ENCODE measurements at regions of chr2 and their contacts with region 1.

Region 1: DNA sequence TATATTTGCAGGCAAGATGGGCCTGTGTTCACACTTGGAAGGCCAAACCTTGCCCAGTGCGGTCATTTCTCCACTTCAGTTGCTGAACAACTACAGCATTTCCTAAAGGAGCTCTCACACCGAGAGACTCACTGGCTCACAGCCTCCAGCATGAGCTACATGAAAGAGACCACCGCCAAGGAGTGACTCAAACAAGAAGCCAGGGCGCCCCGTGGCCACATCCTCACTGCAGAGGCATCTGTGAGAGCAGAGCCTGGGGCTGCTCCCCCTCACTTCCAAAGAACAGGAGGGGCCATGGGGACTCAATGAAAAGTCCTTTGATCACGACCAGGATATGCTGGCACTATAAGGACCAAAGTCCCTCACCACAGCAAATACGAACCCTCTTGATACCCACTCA is 50.0 kb downstream of the TMEM163 start:
- DNase-seq: peak; percentile 83 to 92
- ATAC-seq: peak; percentile 65 to 81 (median 79)
- H3K4me3 ChIP-seq: no peak overlapping the region
- H3K4me3 Mint-ChIP-seq: peak overlapping the region; percentile 78
- H3K27ac ChIP-seq: no peak overlapping the region
- H3K27ac Mint-ChIP-seq: peak overlapping the region; percentile 93 to 98
- H3K4me1 ChIP-seq: peaks cover 89% of the 10 kb centered on the region
- H3K4me1 Mint-ChIP-seq: peaks cover 96 to 100% of the 10 kb centered on the region in 2 donors
- H3K27me3 ChIP-seq: no peaks in the 10 kb centered on the region
- H3K27me3 Mint-ChIP-seq: no peaks in the 10 kb centered on the region
- CTCF ChIP-seq: no peak

Region 2: GRCh38 chr2:134581877-134582546 is 86.8 kb before region 1 on chr2:
- intact Hi-C with region 1: loop called (anchors 2 kb)
- DNase-seq: no peak
- ATAC-seq: no peak
- H3K4me3 ChIP-seq: no peak overlapping the region
- H3K4me3 Mint-ChIP-seq: peak overlapping the region; percentile 5
- H3K27ac ChIP-seq: no peak overlapping the region
- H3K27ac Mint-ChIP-seq: peak overlapping the region; percentile 77 to 79
- H3K4me1 ChIP-seq: peaks cover 46% of the 10 kb centered on the region
- H3K4me1 Mint-ChIP-seq: peaks cover 39 to 58% of the 10 kb centered on the region in 2 donors
- H3K27me3 ChIP-seq: no peaks in the 10 kb centered on the region
- H3K27me3 Mint-ChIP-seq: no peaks in the 10 kb centered on the region
- CTCF ChIP-seq: no peak

Region 3: DNA sequence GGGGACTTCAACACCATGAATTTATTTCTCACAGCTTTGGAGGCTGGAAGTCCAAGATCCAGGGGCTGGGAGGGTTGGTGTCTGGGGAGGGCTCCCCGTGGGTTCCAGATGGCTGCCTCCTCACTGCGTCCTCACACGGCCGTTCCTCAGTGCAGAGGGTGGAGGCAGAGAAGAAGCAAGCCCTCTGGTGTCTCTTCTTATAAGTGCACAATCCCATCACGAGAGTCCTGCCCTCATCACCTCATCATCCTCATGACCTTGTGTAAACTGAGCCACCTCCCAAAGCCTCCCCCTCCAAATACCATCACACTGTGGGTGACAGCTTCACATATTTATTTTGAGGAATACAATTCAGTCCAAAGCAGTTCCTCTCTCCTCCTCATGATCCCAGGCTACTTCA is 23.7 kb after region 1 on chr2:
- intact Hi-C with region 1: loop called (anchors 1 kb)
- DNase-seq: peak in 1 of 2 donors; percentile 70
- ATAC-seq: peak; percentile 56 to 86 (median 85)
- H3K4me3 ChIP-seq: no peak overlapping the region
- H3K4me3 Mint-ChIP-seq: no peak overlapping the region
- H3K27ac ChIP-seq: no peak overlapping the region
- H3K27ac Mint-ChIP-seq: no peak overlapping the region
- H3K4me1 ChIP-seq: peaks cover 3% of the 10 kb centered on the region
- H3K4me1 Mint-ChIP-seq: peaks cover 4% of the 10 kb centered on the region in 2 donors
- H3K27me3 ChIP-seq: no peaks in the 10 kb centered on the region
- H3K27me3 Mint-ChIP-seq: no peaks in the 10 kb centered on the region
- CTCF ChIP-seq: peak; percentile 16

Region 4: DNA sequence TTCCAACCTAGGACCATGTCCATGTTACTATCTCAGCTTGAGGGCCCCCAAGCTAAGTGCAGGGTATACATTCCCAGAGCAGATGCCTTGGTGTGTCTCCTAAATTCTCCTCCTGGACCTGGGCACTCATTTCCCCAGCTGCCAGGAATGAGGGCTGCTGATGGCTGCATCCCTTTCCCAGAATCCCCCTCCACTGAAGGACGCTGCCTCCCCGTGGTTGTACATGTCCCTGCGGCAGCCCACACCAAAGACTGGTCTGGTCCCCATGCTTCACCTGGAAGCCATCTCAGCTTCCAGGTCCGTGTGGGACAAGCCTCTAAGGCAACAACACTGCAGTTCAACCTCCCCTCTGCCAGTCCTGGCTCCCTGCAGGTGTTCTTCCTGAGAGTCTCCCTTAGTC is 35.4 kb after region 1 on chr2:
- intact Hi-C with region 1: no loop called
- DNase-seq: no peak
- ATAC-seq: no peak
- H3K4me3 ChIP-seq: no peak overlapping the region
- H3K4me3 Mint-ChIP-seq: no peak overlapping the region
- H3K27ac ChIP-seq: no peak overlapping the region
- H3K27ac Mint-ChIP-seq: peak overlapping the region in 1 of 2 donors; percentile 33
- H3K4me1 ChIP-seq: peaks cover 23% of the 10 kb centered on the region
- H3K4me1 Mint-ChIP-seq: peaks cover 24 to 31% of the 10 kb centered on the region in 2 donors
- H3K27me3 ChIP-seq: no peaks in the 10 kb centered on the region
- H3K27me3 Mint-ChIP-seq: peaks cover 4 to 8% of the 10 kb centered on the region in 2 donors
- CTCF ChIP-seq: no peak

Region 5: GRCh38 chr2:134918526-134919340 is 249.9 kb after region 1 on chr2 and contains the start of gene CCNT2:
- intact Hi-C with region 1: loop called (anchors 2 kb)
- DNase-seq: peak; percentile 99 to 100
- ATAC-seq: peak; percentile 81 to 93 (median 82)
- H3K4me3 ChIP-seq: peak within 1 kb of the TSS; percentile 92
- H3K4me3 Mint-ChIP-seq: peak within 1 kb of the TSS; percentile 99
- H3K27ac ChIP-seq: peak within 1 kb of the TSS; percentile 98
- H3K27ac Mint-ChIP-seq: peak within 1 kb of the TSS; percentile 93 to 100
- H3K4me1 ChIP-seq: peaks cover 22% of the 10 kb centered on the region
- H3K4me1 Mint-ChIP-seq: peaks cover 46 to 56% of the 10 kb centered on the region in 2 donors
- H3K27me3 ChIP-seq: no peaks in the 10 kb centered on the region
- H3K27me3 Mint-ChIP-seq: peaks cover 4 to 9% of the 10 kb centered on the region in 2 donors
- CTCF ChIP-seq: no peak
- total RNA-seq, gene CCNT2: 86.9 to 93.1 (median 87.8) TPM